ENCODE measurements at regions of chr7 and their contacts with region 1.

Region 1: DNA sequence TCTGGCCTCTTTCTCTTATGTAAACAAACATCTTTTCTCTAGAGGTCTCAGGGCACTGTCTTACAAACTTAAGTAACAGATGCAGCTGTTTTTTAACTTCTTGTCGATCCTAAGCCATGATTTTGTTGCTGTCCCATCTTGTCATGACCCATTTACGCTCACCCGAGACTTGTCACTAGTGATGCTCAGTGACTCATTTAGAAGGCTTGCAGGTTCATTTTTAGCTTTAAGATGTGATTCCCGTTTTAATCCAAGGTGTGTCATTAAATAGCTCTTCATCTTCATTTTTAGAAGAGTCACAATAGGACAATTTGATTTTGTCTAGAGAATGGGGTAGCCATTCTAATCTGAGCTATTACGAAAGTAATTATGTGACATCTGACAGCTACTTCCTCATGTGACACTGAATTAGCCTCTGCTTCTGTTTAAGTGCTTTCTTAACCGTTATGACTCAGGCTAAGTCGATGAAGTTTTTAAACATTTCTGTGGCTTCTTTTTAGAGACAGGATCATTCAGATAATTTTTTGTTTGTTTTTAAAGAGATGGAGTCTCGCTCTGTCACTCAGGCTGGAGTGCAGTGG is 42.7 kb downstream of the SPDYE5 start:
- ATAC-seq: peak in 1 of 8 experiments; percentile 24
- H3K4me3 ChIP-seq: no peak overlapping the region
- H3K27ac ChIP-seq: no peak overlapping the region
- H3K4me1 ChIP-seq: no peaks in the 10 kb centered on the region

Region 2: DNA sequence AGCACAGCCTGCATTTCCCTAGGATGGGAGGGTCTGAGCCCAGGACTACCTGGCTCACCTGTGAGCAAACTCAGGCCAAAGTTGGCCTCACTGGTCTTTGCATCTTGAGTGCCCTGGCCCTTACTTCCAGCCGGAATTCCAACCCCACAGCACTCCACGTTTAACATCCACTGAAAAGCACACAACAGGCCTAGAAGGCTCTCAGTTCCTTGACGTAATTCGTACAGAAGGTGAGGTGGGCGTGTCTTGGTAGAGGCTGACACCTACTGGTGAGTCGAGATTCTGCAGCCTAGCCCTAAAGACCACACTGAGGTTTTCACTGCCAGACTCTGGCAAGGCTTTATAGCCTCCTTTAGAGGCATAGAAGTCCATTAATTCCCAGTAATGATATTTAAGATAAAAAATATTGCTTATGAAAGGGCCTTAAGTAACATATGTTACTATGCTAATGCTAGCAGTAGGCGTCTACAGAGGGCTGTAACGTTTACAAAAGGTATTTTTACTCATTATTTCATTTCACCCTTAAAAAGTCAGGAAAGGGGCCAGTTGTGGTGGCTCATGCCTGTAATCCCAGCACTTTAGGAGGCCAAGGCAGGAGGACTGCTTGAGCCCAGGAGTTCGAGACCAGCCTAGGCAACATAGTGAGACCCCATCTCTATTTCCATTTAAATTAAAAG is 108.1 kb after region 1 on chr7:
- in situ Hi-C with region 1: loop called in 1 of 9 experiments (anchors 25 kb)
- ATAC-seq: peak in 2 of 8 experiments; percentile 30 to 62
- H3K4me3 ChIP-seq: no peak overlapping the region
- H3K27ac ChIP-seq: no peak overlapping the region
- H3K4me1 ChIP-seq: peaks cover 7 to 12% of the 10 kb centered on the region in 2 donors

Region 3: GRCh38 chr7:75662579-75663301 is 127.9 kb after region 1 on chr7:
- in situ Hi-C with region 1: no loop called
- ATAC-seq: no peak
- H3K4me3 ChIP-seq: no peak overlapping the region
- H3K27ac ChIP-seq: no peak overlapping the region
- H3K4me1 ChIP-seq: no peaks in the 10 kb centered on the region

Region 4: DNA sequence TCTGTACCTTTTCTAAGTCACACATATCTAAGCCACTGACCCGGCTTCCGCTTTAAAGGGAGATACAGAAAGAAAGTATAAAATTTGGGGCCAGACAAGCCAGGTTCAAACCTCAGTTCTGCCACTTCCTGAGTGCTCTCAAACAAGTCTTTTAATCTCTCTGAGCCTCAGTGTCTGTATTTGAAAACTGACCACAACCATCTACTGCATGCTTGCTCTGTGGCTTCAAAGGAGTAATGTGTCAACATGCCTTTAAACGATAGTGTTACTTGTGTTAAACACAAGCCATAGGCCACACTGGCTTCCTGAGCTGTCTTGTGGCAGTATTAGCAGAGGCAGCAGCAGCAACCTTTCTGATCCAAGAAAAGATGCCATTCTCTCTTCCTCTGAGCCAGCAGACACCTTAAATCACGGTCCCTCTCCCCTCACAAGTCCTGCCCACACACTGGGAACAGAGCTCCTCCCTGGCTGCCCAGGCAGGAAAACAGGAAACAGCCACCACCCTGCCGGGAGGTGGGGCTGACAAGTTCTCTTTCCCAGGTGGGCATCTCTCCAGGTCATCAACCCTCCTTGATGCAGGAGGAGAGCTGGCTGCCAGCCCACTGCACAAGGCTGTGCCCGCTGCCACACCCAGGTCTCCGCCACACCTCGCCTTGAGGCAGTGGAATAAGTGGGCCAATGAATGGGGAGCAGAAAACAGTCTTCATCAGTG is 193.2 kb after region 1 on chr7:
- in situ Hi-C with region 1: loop called in 1 of 9 experiments (anchors 10 kb)
- ATAC-seq: peak in 3 of 8 experiments; percentile 27 to 52 (median 43)
- H3K4me3 ChIP-seq: no peak overlapping the region
- H3K27ac ChIP-seq: no peak overlapping the region
- H3K4me1 ChIP-seq: peaks cover 0 to 4% of the 10 kb centered on the region in 2 donors

Measured in motor neuron (in vitro differentiated cells).